Activated B cell treated with CpG ODN at 0.5 μM for 24 hours (primary cell): ENCODE measurements at regions of chr6 and their contacts with region 1.

Region 1: DNA sequence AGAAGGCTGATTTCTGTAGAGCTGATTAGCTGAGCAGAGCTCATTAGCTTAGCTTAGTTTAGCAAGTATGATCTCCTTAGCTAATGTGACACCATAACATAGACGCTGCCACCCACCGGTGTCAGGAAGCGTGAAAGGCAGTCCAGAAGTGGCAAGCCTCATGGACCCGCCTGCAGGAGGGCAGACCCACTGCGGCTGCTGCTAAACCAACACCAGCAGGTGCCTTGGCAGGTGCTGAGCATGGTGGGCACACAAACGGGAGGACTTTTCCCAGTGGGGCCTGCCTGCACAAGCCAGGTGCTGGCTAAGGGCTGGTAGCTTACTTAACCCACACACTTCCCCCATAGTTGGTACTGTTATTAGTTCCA is 22.7 kb downstream of the ZDHHC14 start:
- DNase-seq: no peak
- ATAC-seq: peak; percentile 69
- H3K4me3 Mint-ChIP-seq: no peak overlapping the region
- H3K27ac Mint-ChIP-seq: no peak overlapping the region
- H3K4me1 Mint-ChIP-seq: peaks cover 20% of the 10 kb centered on the region
- H3K27me3 Mint-ChIP-seq: no peaks in the 10 kb centered on the region
- CTCF ChIP-seq: no peak

Region 2: GRCh38 chr6:157434349-157435033 is 30.8 kb after region 1 on chr6:
- CTCF ChIA-PET with region 1: no interaction called
- POLR2A ChIA-PET with region 1: no interaction called
- intact Hi-C with region 1: loop called (anchors 5 kb)
- DNase-seq: no peak
- ATAC-seq: no peak
- H3K4me3 Mint-ChIP-seq: no peak overlapping the region
- H3K27ac Mint-ChIP-seq: no peak overlapping the region
- H3K4me1 Mint-ChIP-seq: peaks cover 14% of the 10 kb centered on the region
- H3K27me3 Mint-ChIP-seq: no peaks in the 10 kb centered on the region
- CTCF ChIP-seq: no peak

Region 3: DNA sequence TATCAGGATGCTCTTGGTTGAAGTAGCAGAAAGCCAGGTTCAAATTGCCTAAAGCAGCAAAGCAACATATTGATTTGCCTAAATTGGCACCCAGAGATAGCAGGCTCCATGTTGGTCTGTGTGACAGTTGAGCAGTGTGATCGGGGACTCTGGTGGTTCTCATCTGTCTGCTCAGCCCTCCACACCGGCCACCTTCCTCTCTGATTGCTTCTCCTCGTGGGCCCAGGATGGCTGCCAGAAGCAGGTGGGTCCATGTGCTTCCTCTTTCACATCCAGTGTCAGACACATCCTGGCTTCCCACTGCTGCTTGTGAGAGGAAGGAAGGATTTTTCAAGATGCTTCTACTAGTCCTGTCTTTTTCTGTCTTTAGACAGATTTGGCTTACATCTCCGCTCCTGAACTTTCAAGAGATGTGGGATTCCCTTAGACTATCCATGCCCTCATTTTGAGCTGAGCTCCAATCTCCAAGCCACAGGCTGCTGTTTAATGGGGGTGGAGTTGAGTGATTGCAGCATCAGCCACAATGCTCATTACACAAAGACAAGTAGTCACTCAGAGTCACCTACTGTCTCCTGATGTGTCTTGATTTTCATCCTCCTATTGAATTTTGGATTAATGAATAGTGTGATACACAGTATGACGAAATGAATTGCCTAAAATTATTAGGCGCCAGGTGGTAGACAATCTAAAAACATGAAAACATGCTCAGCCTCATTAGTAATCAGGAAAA is 99.5 kb after region 1 on chr6:
- CTCF ChIA-PET with region 1: no interaction called
- POLR2A ChIA-PET with region 1: no interaction called
- intact Hi-C with region 1: no loop called
- DNase-seq: no peak
- ATAC-seq: no peak
- H3K4me3 Mint-ChIP-seq: no peak overlapping the region
- H3K27ac Mint-ChIP-seq: no peak overlapping the region
- H3K4me1 Mint-ChIP-seq: peaks cover 42% of the 10 kb centered on the region
- H3K27me3 Mint-ChIP-seq: no peaks in the 10 kb centered on the region
- CTCF ChIP-seq: no peak

Region 4: DNA sequence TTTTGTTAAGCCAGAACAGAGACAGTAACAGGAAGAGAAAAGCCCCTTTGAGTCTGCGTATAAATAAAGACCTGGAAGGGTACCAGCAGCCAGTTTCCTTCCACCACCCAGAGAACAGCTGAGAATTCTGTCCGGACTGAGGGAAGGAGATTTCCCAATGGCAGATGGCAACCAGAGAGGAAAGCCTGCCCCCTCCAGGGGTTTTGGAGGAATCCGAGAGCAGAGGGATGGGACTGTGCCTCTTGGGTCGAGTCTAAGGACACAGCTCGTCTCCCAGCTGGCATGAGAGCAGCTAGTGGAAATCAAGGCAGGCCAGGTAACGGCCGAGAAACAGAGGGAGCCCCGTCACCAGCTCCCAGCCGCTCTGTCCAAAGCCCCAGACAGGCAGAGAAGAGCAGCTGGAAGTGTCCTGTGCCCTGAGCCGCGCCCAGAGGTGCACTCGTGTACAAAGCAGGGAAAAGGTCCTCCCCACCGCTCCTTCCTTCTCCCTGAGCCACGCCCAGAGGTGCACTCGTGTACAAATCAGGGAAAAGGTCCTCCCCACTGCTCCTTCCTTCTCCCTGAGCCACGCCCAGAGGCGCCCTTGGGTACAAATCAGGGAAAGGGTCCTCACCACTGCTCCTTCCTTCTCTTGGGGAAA is 285.4 kb after region 1 on chr6:
- CTCF ChIA-PET with region 1: no interaction called
- POLR2A ChIA-PET with region 1: no interaction called
- intact Hi-C with region 1: no loop called
- DNase-seq: no peak
- ATAC-seq: no peak
- H3K4me3 Mint-ChIP-seq: no peak overlapping the region
- H3K27ac Mint-ChIP-seq: no peak overlapping the region
- H3K4me1 Mint-ChIP-seq: no peaks in the 10 kb centered on the region
- H3K27me3 Mint-ChIP-seq: peaks cover 9% of the 10 kb centered on the region
- CTCF ChIP-seq: no peak